GM12878 (cell line): ENCODE measurements at regions of chr12 and their contacts with region 1.

Region 1: GRCh38 chr12:89825591-89826449 is 117.2 kb upstream of the ATP2B1 start:
- DNase-seq: peak; percentile 27
- ATAC-seq: peak; percentile 78
- H3K4me3 ChIP-seq: no peak overlapping the region
- H3K27ac ChIP-seq: peak overlapping the region; percentile 37; the same call in 1 of the 2 replicates
- H3K4me1 ChIP-seq: peaks cover 16% of the 10 kb centered on the region
- H3K27me3 ChIP-seq: no peaks in the 10 kb centered on the region
- CTCF ChIP-seq: no peak
- EP300 ChIP-seq: peak in 1 of 2 experiments; percentile 61; a peak in 1 of 4 replicates
- POLR2A ChIP-seq: no peak
- RAD21 ChIP-seq: peak; percentile 32; the same call in 1 of the 2 replicates

Region 2: DNA sequence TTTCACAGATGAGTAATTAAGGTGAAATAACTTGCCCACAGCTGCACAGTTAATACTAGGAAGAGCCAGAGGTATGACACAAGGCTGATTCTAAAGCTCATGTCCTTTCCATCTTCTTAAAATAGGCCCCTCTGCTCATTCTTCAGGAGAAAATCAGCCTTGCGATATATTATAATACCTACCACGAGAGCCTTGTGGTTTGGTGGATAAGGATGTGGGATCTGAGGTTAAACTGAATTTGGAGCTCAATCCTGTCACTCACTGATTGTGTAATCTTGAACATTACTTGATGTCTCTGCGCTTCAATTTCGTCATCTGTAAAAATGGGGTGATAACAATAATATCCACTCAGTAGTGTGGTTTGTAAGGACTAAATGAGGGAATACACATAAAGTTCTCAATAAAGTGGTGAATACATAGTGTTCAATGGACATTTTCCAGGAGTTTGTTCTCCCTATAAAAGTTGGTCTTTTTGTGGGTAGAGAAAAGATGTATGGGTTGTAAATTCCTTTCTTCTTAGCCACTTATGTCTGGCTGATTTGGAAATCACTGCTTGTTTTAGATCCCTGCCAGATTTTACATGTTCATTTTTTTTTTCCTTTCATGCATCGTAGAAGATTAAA is 92.1 kb before region 1 on chr12:
- CTCF ChIA-PET with region 1: no interaction called
- POLR2A ChIA-PET with region 1: no interaction called
- RAD21 ChIA-PET with region 1: no interaction called
- SMC1A ChIA-PET with region 1: no interaction called
- in situ Hi-C with region 1: no loop called
- intact Hi-C with region 1: no loop called
- DNase-seq: no peak
- ATAC-seq: no peak
- H3K4me3 ChIP-seq: no peak overlapping the region
- H3K27ac ChIP-seq: no peak overlapping the region
- H3K4me1 ChIP-seq: no peaks in the 10 kb centered on the region
- H3K27me3 ChIP-seq: no peaks in the 10 kb centered on the region
- CTCF ChIP-seq: no peak
- EP300 ChIP-seq: no peak
- POLR2A ChIP-seq: no peak
- RAD21 ChIP-seq: no peak

Region 3: DNA sequence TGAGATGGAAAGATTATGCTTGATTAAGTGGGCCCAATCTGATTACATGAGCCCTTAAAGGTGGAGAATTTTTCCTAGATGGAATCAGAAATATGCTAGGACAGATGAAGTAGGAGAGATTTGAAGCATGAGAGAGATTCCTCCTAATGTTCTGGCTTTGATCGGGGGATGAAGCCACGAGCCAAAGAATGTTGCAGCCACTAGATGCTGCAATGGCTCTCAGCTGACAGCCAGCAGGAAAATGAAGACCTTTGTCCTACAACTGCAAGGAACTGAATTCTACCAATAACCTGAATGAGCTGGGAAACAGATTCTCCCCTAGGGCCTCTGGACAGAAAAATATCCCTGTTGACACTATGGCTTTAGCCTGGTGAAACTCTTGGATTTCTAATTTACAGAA is 34.5 kb before region 1 on chr12:
- CTCF ChIA-PET with region 1: no interaction called
- POLR2A ChIA-PET with region 1: no interaction called
- RAD21 ChIA-PET with region 1: no interaction called
- SMC1A ChIA-PET with region 1: no interaction called
- in situ Hi-C with region 1: no loop called
- intact Hi-C with region 1: no loop called
- DNase-seq: no peak
- ATAC-seq: no peak
- H3K4me3 ChIP-seq: no peak overlapping the region
- H3K27ac ChIP-seq: no peak overlapping the region
- H3K4me1 ChIP-seq: peaks cover 4% of the 10 kb centered on the region; the same call in 1 of the 2 replicates
- H3K27me3 ChIP-seq: no peaks in the 10 kb centered on the region
- CTCF ChIP-seq: no peak
- EP300 ChIP-seq: no peak
- POLR2A ChIP-seq: no peak
- RAD21 ChIP-seq: no peak

Region 4: GRCh38 chr12:89838833-89839232 is 13.0 kb after region 1 on chr12:
- CTCF ChIA-PET with region 1: interaction called, 4 read pairs
- POLR2A ChIA-PET with region 1: no interaction called
- RAD21 ChIA-PET with region 1: no interaction called
- SMC1A ChIA-PET with region 1: interaction called, 10 read pairs
- in situ Hi-C with region 1: no loop called
- intact Hi-C with region 1: no loop called
- DNase-seq: no peak
- ATAC-seq: no peak
- H3K4me3 ChIP-seq: no peak overlapping the region
- H3K27ac ChIP-seq: no peak overlapping the region
- H3K4me1 ChIP-seq: no peaks in the 10 kb centered on the region
- H3K27me3 ChIP-seq: no peaks in the 10 kb centered on the region
- CTCF ChIP-seq: no peak
- EP300 ChIP-seq: no peak
- POLR2A ChIP-seq: no peak
- RAD21 ChIP-seq: no peak

Region 5: GRCh38 chr12:89856431-89856830 is 30.6 kb after region 1 on chr12:
- CTCF ChIA-PET with region 1: no interaction called
- POLR2A ChIA-PET with region 1: no interaction called
- RAD21 ChIA-PET with region 1: interaction called, 3 read pairs
- SMC1A ChIA-PET with region 1: interaction called, 4 read pairs
- in situ Hi-C with region 1: no loop called
- intact Hi-C with region 1: loop called (anchors 1 kb)
- DNase-seq: peak; percentile 85
- ATAC-seq: peak; percentile 90
- H3K4me3 ChIP-seq: no peak overlapping the region
- H3K27ac ChIP-seq: peak overlapping the region; percentile 42
- H3K4me1 ChIP-seq: peaks cover 43% of the 10 kb centered on the region
- H3K27me3 ChIP-seq: no peaks in the 10 kb centered on the region
- CTCF ChIP-seq: no peak
- EP300 ChIP-seq: peak; percentile 97
- POLR2A ChIP-seq: no peak
- RAD21 ChIP-seq: peak; percentile 27; the same call in 1 of the 2 replicates

Region 6: DNA sequence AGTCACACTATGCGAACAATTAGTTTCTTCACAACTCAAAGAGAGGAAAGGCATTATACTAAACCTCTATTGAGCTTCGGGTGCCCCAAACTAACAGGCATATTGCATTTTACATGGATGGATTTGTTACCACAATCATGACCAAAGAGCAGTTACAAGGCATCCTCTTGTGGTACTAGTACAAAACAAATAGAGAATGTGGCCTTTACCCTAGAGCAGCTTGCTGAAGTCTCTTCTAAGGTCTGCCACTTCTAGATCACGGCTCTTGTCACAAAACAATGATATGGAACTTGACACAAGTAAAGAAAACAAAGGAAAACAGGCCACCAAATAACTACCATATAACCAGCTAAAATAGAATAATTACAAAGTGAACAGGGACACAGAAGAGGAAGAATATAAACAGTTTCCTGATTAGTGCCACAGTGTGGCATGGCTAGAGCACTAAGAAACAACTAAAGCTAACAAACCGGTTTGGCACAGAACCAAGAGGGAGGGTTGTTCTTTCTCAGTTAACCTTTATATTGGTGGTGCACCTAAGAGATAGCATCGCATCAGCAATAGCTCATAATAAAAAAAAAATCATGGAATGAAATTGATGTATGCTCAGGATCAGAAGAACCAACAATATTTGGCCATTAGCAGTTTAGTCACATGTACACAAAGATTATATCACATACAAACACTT is 92.5 kb after region 1 on chr12:
- CTCF ChIA-PET with region 1: no interaction called
- POLR2A ChIA-PET with region 1: no interaction called
- RAD21 ChIA-PET with region 1: no interaction called
- SMC1A ChIA-PET with region 1: no interaction called
- in situ Hi-C with region 1: no loop called
- intact Hi-C with region 1: no loop called
- DNase-seq: no peak
- ATAC-seq: no peak
- H3K4me3 ChIP-seq: no peak overlapping the region
- H3K27ac ChIP-seq: no peak overlapping the region
- H3K4me1 ChIP-seq: no peaks in the 10 kb centered on the region
- H3K27me3 ChIP-seq: no peaks in the 10 kb centered on the region
- CTCF ChIP-seq: no peak
- EP300 ChIP-seq: no peak
- POLR2A ChIP-seq: no peak
- RAD21 ChIP-seq: no peak